Activated CD8-positive, alpha-beta T cell treated with anti-CD3 and anti-CD28 coated beads, Interleukin-2, amount 10 ng/mL, durations not matched to agents 7 days and 5 days (primary cell): ENCODE measurements at regions of chr19 and their contacts with region 1.

Region 1: GRCh38 chr19:47514869-47515588 is at the start of gene NAPA:
- DNase-seq: peak; percentile 100
- ATAC-seq: peak; percentile 96
- H3K4me3 Mint-ChIP-seq: peak within 1 kb of the TSS; percentile 94
- H3K27ac Mint-ChIP-seq: peak within 1 kb of the TSS; percentile 96
- H3K4me1 Mint-ChIP-seq: peaks cover 81% of the 10 kb centered on the region
- H3K27me3 Mint-ChIP-seq: peaks cover 11% of the 10 kb centered on the region
- total RNA-seq, gene NAPA: 90.0 to 103 TPM

Region 2: DNA sequence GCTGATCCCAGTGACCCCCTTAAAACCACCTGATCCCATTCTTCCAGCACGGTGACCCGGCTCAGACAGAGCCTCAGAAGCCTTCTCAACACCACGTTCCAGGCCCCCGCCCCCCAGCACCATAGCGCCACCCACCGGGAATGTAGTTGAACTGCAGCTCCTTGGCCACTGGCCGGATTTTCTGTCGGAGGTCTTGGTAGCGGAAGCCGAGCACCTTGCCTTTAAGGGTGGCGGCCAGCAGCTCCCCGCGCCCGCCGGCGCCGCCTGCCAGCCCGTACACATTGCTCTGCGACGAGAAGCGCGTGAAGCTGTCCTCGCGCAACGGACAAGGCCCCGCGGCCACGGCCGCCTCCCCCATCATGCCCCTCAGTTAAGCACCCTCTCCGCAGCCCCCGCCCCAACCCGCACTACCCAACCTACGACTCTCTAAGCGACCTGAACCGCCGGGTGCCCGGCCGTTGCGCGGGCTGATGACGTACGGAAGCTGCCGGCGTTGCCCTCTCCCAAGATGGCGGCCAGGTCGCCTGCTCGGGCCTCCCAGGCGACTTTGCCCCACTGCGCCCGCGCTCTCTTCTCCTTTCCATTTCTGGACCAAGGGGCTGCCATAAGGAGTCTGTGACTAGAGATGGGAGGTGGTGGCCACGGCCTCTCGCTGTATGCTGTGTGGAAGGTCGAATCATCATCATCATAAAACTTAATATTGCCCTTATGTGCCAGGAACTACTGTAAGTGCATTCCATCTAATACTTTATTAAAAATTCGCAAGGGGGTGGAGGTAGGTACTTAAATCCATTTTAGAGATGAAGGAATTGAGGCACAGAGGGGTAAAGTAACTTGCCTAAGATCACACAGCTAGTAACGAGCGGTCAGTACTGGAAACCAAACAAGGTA is 31.0 kb before region 1 on chr19 and contains the start of gene KPTN:
- CTCF ChIA-PET with region 1: interaction called, 20 read pairs
- POLR2A ChIA-PET with region 1: interaction called, 17 read pairs
- DNase-seq: peak; percentile 93
- ATAC-seq: peak; percentile 91
- H3K4me3 Mint-ChIP-seq: peak within 1 kb of the TSS; percentile 97
- H3K27ac Mint-ChIP-seq: peak within 1 kb of the TSS; percentile 100
- H3K4me1 Mint-ChIP-seq: peaks cover 42% of the 10 kb centered on the region
- H3K27me3 Mint-ChIP-seq: no peaks in the 10 kb centered on the region
- total RNA-seq, gene KPTN: 12.6 to 13.0 TPM

Region 3: DNA sequence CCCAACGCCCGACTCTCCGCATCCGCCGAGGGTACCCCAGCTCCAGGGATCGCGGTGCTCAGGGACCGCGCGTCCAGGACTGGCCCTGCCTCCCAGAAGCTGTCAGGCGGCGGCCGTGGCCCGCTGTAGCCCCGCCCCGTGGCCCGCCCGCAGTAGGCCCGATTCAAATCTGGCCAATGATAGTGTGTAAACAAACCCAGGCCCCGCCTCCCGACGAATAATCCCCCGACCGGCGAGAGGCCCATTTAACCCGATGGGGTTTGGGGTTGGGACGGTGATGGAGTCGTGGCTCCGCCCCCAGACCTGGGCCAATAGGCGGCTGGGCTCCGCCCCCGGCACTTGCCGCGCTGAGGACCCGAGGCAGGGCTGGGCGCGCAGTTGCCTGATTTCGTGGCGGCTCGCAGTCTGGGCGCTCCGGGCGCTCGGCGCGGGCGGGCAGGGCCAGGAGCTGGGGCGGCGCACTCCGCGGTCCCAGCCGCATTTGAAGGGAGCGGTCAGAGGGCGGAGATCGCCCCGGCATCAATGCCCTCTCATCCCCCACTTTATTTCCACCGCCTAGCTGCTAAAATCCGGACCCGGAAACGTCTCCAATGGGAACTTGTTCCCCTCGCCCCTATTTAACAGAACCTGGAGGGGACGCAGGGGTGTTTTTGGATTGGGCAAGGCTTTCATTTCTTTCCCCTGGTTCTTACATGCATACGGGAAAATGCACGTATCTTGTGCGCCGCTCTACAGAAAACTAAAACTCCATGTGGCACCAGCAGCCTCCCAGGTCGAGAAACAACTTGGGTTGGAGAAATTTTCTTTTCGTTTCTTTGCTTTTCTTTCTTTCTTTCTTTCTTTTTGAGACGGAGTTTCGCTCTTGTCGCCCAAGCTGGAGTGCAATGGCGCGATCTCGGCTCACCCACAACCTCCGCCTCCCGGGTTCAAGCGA is 85.5 kb after region 1 on chr19:
- CTCF ChIA-PET with region 1: interaction called, 9 read pairs
- POLR2A ChIA-PET with region 1: interaction called, 15 read pairs
- DNase-seq: peak; percentile 100
- ATAC-seq: peak; percentile 98
- H3K4me3 Mint-ChIP-seq: peak overlapping the region; percentile 82
- H3K27ac Mint-ChIP-seq: peak overlapping the region; percentile 91
- H3K4me1 Mint-ChIP-seq: peaks cover 53% of the 10 kb centered on the region
- H3K27me3 Mint-ChIP-seq: peaks cover 2% of the 10 kb centered on the region

Region 4: GRCh38 chr19:47608074-47608918 is 93.3 kb after region 1 on chr19:
- CTCF ChIA-PET with region 1: interaction called, 13 read pairs
- POLR2A ChIA-PET with region 1: interaction called, 12 read pairs
- DNase-seq: peak; percentile 95
- ATAC-seq: peak; percentile 91
- H3K4me3 Mint-ChIP-seq: peak overlapping the region; percentile 88
- H3K27ac Mint-ChIP-seq: peak overlapping the region; percentile 86
- H3K4me1 Mint-ChIP-seq: peaks cover 33% of the 10 kb centered on the region
- H3K27me3 Mint-ChIP-seq: peaks cover 2% of the 10 kb centered on the region